ENCODE measurements at regions of chr15 and their contacts with region 1.

Region 1: GRCh38 chr15:79184465-79184892 is 93.9 kb upstream of the RASGRF1 start:
- DNase-seq: peak; percentile 55
- ATAC-seq: peak; percentile 80
- H3K4me3 ChIP-seq: no peak overlapping the region
- H3K27ac ChIP-seq: no peak overlapping the region
- H3K4me1 ChIP-seq: no peaks in the 10 kb centered on the region
- H3K27me3 ChIP-seq: no peaks in the 10 kb centered on the region; the same call in none of the 2 replicates
- CTCF ChIP-seq: peak; percentile 92
- POLR2A ChIP-seq: no peak
- RAD21 ChIP-seq: peak; percentile 84

Region 2: DNA sequence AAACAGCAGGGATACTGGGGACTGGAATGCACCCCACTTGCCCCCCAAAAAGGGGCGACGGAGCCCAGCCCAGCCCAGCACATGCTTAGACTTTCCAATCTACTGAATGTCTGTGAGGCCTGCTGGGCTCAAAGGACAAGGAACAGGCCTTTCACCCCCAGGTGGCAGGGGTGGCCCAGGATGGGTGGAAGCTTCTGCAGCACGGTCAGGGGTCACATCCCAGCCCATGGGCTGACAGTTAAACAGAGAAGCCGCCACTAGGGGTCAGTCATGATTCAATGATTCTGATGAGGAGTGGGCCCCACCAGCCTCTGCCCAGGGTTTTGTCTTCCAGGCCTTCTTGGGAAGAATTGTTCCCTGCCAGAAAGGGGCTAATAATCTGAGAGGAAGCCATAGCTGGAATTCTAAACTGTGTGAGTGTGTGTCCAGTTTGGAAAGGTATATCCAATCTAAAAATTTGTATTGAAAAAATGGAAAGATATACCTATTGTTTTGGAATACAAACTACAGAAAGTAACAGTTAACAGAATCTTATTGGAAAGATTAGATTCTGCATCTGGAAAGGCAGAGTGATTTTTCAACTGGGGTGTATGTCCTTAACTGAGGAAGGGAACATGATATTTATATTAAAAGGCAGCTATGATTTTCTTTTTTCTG is 545.7 kb before region 1 on chr15:
- CTCF ChIA-PET with region 1: no interaction called
- POLR2A ChIA-PET with region 1: no interaction called
- dilution Hi-C with region 1: no loop called
- in situ Hi-C with region 1: no loop called
- intact Hi-C with region 1: loop called (anchors 1 kb)
- DNase-seq: peak; percentile 19
- ATAC-seq: peak; percentile 76
- H3K4me3 ChIP-seq: no peak overlapping the region
- H3K27ac ChIP-seq: no peak overlapping the region
- H3K4me1 ChIP-seq: no peaks in the 10 kb centered on the region
- H3K27me3 ChIP-seq: peaks cover 50% of the 10 kb centered on the region
- CTCF ChIP-seq: peak; percentile 59
- POLR2A ChIP-seq: no peak
- RAD21 ChIP-seq: peak; percentile 58

Region 3: DNA sequence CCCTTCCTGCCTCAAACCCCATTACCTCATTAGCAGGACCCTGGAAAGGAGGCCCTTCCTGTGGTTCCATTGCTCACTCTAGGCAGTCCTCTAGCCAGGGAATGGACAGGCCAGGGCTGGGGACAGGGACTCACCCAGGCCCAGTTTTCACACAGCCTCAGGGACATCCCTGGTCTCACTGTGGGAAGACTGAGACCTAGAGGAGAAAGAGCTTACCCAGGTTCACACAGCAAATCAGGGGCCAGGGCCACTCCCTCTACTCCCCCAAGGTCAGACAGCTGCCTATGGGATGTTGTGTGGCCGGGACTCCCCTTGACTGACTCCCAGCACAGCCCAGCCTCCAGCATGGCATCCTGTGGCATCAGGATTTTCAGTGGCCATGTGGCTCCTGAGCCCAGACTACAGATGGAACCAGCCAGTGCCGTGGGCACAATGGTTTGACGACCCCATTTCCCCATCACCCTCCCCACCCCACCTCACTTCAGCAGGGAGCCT is 422.5 kb before region 1 on chr15:
- CTCF ChIA-PET with region 1: no interaction called
- POLR2A ChIA-PET with region 1: no interaction called
- dilution Hi-C with region 1: no loop called
- in situ Hi-C with region 1: no loop called
- intact Hi-C with region 1: loop called (anchors 1 kb)
- DNase-seq: no peak
- ATAC-seq: no peak
- H3K4me3 ChIP-seq: no peak overlapping the region
- H3K27ac ChIP-seq: no peak overlapping the region
- H3K4me1 ChIP-seq: peaks cover 12% of the 10 kb centered on the region
- H3K27me3 ChIP-seq: no peaks in the 10 kb centered on the region
- CTCF ChIP-seq: no peak
- POLR2A ChIP-seq: no peak
- RAD21 ChIP-seq: no peak

Region 4: GRCh38 chr15:78811124-78811824 is 373.2 kb before region 1 on chr15 and contains the start of gene ADAMTS7:
- CTCF ChIA-PET with region 1: no interaction called
- POLR2A ChIA-PET with region 1: no interaction called
- dilution Hi-C with region 1: no loop called
- in situ Hi-C with region 1: no loop called
- intact Hi-C with region 1: no loop called
- DNase-seq: peak; percentile 71
- ATAC-seq: peak; percentile 95
- H3K4me3 ChIP-seq: peak within 1 kb of the TSS; percentile 96
- H3K27ac ChIP-seq: peak within 1 kb of the TSS; percentile 70
- H3K4me1 ChIP-seq: peaks cover 8% of the 10 kb centered on the region
- H3K27me3 ChIP-seq: no peaks in the 10 kb centered on the region
- CTCF ChIP-seq: peak; percentile 71
- POLR2A ChIP-seq: no peak; the same call in 1 of the 2 replicates
- RAD21 ChIP-seq: peak; percentile 24
- total RNA-seq, gene ADAMTS7: 0.83 and 1.4 TPM in 2 replicates

Region 5: DNA sequence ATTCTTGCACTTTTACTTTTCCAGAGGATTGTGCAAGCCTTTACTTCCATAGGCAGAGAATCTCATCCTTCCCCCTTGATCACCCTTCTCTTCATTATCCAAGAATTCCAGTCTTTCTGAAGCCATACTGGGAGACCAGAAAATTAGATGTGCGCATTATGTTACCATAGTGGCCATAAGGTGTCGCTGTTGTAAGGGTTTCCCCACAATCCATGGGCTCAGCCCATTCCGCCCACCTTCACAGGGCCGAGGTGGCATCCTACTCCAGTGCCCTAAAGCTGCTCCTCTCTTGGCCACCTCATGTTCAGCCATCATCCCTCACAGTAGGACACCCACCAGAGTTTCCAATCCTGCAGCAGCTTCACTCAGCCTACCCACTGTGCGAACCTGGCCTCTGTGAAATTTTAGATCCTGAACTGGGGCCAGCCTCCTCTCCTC is 274.7 kb before region 1 on chr15:
- CTCF ChIA-PET with region 1: interaction called, 4 read pairs
- POLR2A ChIA-PET with region 1: no interaction called
- dilution Hi-C with region 1: no loop called
- in situ Hi-C with region 1: loop called (anchors 5 kb)
- intact Hi-C with region 1: loop called (anchors 1 kb)
- DNase-seq: peak; percentile 45
- ATAC-seq: peak; percentile 28
- H3K4me3 ChIP-seq: no peak overlapping the region
- H3K27ac ChIP-seq: no peak overlapping the region
- H3K4me1 ChIP-seq: peaks cover 15% of the 10 kb centered on the region
- H3K27me3 ChIP-seq: no peaks in the 10 kb centered on the region
- CTCF ChIP-seq: peak; percentile 70
- POLR2A ChIP-seq: no peak
- RAD21 ChIP-seq: peak; percentile 69

Region 6: GRCh38 chr15:79028411-79028964 is 156.0 kb before region 1 on chr15:
- CTCF ChIA-PET with region 1: interaction called, 22 read pairs
- POLR2A ChIA-PET with region 1: no interaction called
- dilution Hi-C with region 1: no loop called
- in situ Hi-C with region 1: loop called (anchors 5 kb)
- intact Hi-C with region 1: loop called (anchors 1 kb)
- DNase-seq: peak; percentile 20
- ATAC-seq: peak; percentile 72
- H3K4me3 ChIP-seq: no peak overlapping the region
- H3K27ac ChIP-seq: no peak overlapping the region
- H3K4me1 ChIP-seq: no peaks in the 10 kb centered on the region
- H3K27me3 ChIP-seq: peaks cover 2% of the 10 kb centered on the region; the same call in 1 of the 2 replicates
- CTCF ChIP-seq: peak; percentile 68
- POLR2A ChIP-seq: no peak
- RAD21 ChIP-seq: peak; percentile 76

Measured in IMR-90 (cell line).